Posterior cingulate gyrus (tissue), 11 donors: ENCODE measurements at regions of chr16 and their contacts with region 1.

Region 1: GRCh38 chr16:31873556-31874365 is at the start of gene ZNF267:
- DNase-seq: peak; percentile 85 to 98 (median 92)

Region 2: DNA sequence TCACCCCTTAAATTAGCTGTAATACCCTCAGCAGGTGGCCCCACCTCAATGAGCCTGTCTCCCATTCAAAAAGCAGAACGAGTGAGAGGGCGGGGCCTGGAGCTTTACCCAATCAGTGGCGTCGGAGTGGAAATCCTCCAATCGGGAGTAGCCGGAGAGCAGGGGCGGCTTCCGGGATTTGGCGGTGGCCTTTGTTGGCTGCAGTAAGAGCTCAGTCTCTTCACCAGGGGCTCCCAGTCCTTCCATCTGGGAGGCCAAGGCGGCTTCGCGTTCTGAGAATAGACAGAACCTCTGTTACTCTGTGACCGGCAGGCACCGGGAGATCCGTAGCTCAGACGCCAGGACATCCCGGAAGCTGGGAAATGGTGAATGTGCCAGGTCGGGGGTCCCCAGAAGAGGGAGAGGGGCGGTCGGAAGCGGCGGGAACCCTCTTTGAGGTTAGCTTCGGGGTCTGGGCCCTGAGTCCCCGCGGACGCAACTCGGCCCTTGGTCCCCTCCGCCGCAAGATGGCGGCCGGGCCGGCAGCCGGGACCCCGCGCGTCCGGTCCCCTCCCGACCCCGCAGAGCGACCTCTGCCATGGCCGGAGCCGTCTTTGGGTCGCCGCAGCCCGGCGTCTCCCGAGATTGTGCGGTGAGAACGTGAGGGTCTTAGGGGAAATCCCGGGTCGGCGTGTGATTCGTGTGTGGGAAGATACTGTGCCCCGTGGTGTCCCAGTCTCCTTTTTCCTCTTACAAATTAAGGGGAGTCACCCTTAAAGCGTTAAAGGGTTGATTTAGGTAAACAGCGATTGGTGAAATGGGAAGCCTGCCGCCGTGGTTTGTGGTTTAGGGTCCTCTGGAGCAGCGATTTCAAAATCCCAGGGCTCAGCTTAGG is 160.5 kb before region 1 on chr16:
- intact Hi-C with region 1: loop called (anchors 5 kb)
- DNase-seq: peak; percentile 87 to 99 (median 94)

Region 3: DNA sequence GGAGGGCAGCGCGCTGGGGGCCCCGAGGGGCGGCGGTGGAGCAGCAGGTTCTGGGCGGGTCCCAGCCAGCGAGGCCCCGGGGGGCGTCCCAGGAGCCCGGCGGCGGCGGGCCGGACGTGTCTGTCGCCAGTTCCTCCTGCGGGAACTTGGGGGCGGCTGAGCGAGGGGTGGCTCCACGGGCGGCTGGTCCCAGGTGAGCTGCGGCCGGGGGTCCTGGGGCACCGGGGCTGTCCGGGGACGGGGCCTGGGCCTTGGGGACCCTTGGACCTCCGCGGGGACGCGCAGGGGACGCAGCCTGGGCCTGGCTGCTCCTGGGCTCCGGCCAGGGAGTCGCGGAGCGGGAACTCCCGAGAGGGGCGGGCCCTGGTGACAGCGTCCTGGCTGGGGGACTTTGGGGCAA is 54.4 kb before region 1 on chr16:
- intact Hi-C with region 1: no loop called
- DNase-seq: peak in 1 of 10 donors; percentile 82